ENCODE measurements at regions of chr2 and their contacts with region 1.

Region 1: GRCh38 chr2:232668805-232669444 is 28.2 kb upstream of the GIGYF2 start:
- DNase-seq: peak in 3 of 5 donors; percentile 24 to 42 (median 36)
- ATAC-seq: peak; percentile 19 to 80 (median 68)
- H3K4me3 ChIP-seq: no peak overlapping the region
- H3K27ac ChIP-seq: peak overlapping the region in 4 of 12 donors; percentile 19 to 80 (median 55)
- H3K4me1 ChIP-seq: peaks cover 0 to 26% (median 2%) of the 10 kb centered on the region in 12 donors
- H3K27me3 ChIP-seq: no peaks in the 10 kb centered on the region
- CTCF ChIP-seq: peak in 11 of 12 donors; percentile 20 to 73 (median 55)
- POLR2A ChIP-seq: no peak

Region 2: DNA sequence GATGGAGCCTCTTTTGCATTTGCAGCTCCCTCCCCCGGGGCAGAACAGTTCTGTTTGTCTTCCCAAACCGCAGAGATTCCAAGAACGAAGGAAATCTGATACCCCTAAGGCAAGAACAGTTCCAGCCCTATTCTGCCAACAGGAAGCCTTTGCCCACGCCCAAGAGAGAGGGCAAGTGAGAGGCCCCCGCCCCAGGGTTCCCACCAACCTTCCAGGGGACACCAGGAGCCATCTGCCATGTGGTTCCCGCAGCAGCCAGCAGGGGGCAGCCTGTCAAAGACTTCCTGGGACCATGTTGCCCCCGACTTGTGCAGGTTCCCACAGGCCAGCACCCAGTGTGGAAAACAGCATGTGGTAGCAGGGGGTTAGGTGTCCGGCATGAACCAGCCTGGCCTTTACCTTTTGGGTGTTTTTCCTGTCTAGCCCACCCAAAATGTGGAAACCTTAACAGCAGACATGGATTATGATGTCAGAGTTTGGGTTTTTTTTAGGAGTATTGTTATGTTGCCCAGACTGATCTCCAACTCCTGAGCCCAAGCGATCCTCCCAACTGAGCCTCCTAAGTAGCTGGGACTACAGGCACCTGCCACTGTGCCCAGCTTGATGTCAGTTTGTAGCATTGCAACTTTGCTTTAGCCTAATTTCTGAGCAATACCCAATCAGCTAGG is 57.2 kb before region 1 on chr2:
- intact Hi-C with region 1: loop called (anchors 1 to 5 kb)
- DNase-seq: peak; percentile 48 to 84 (median 57)
- ATAC-seq: peak in 3 of 4 donors; percentile 65 to 73 (median 69)
- H3K4me3 ChIP-seq: no peak overlapping the region
- H3K27ac ChIP-seq: no peak overlapping the region
- H3K4me1 ChIP-seq: peaks cover 0 to 6% (median 0%) of the 10 kb centered on the region in 12 donors
- H3K27me3 ChIP-seq: no peaks in the 10 kb centered on the region
- CTCF ChIP-seq: peak; percentile 68 to 85 (median 78)
- POLR2A ChIP-seq: no peak

Region 3: DNA sequence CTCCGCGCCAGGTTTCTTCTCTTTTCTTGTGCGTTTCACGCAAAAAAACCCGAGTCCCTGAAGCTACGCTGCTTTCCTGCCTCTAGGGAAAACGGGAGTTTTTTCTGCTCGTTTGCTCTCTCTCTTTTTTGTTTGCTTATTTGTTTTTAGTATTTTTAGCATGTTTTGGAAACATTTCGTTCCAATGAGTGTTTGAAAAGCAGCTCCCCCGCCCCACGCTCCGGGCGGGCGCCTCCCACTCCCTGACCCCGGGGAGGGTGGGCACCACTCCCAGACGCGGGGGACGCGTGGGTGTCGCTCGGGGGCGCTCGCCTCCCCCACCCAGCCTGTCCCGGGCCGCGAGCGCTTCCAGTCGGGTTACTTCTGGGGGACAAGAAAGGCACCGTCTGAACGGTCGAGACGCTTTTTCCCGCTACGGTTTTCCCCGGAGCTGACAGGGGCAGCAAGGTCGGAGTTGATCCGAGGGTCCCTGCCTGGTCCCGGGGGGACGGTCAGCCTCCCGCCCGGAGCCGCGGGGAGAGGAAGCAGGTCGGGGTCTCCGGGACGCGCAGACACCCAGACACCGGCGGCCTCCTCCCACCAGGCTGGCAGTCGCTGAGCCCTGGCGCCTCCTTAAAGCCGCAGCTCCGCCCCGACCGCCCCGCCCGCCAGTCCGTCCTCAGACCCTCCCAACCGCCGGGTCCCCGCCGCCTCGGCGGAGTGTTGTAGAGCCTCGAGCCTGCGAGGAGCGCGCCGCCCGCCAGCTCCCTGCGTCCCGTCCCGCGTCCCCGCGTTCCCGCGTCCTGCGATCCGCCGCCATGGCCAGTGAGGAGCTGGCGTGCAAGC is 35.8 kb before region 1 on chr2 and contains the start of gene EFHD1:
- intact Hi-C with region 1: loop called in 2 of 10 experiments (anchors 2 to 5 kb)
- DNase-seq: peak; percentile 86 to 90 (median 88)
- ATAC-seq: peak; percentile 53 to 93 (median 86)
- H3K4me3 ChIP-seq: peak within 1 kb of the TSS; percentile 54 to 81 (median 66)
- H3K27ac ChIP-seq: peak within 1 kb of the TSS; percentile 69 to 95 (median 86)
- H3K4me1 ChIP-seq: peaks cover 0 to 39% (median 13%) of the 10 kb centered on the region in 12 donors
- H3K27me3 ChIP-seq: peaks cover 0 to 42% (median 6%) of the 10 kb centered on the region in 9 donors
- CTCF ChIP-seq: peak in 2 of 12 donors; percentile 10
- POLR2A ChIP-seq: peak in 1 of 2 donors; percentile 83
- total RNA-seq, gene EFHD1: 9.0 to 44.8 (median 20.7) TPM

Region 4: GRCh38 chr2:232700154-232700553 is 31.2 kb after region 1 on chr2:
- intact Hi-C with region 1: no loop called
- DNase-seq: no peak
- ATAC-seq: no peak
- H3K4me3 ChIP-seq: no peak overlapping the region
- H3K27ac ChIP-seq: no peak overlapping the region
- H3K4me1 ChIP-seq: peaks cover 2 to 50% (median 34%) of the 10 kb centered on the region in 12 donors
- H3K27me3 ChIP-seq: no peaks in the 10 kb centered on the region
- CTCF ChIP-seq: no peak
- POLR2A ChIP-seq: no peak

Region 5: GRCh38 chr2:232731470-232731869 is 62.5 kb after region 1 on chr2:
- intact Hi-C with region 1: no loop called
- DNase-seq: no peak
- ATAC-seq: no peak
- H3K4me3 ChIP-seq: no peak overlapping the region
- H3K27ac ChIP-seq: no peak overlapping the region
- H3K4me1 ChIP-seq: peaks cover 0 to 8% (median 0%) of the 10 kb centered on the region in 12 donors
- H3K27me3 ChIP-seq: no peaks in the 10 kb centered on the region
- CTCF ChIP-seq: no peak
- POLR2A ChIP-seq: no peak